Endothelial cell of umbilical vein (primary cell): ENCODE measurements at regions of chr1 and their contacts with region 1.

Region 1: GRCh38 chr1:226736908-226737818 is 1.9 kb downstream of the ITPKB start:
- DNase-seq: peak; percentile 50
- H3K4me3 ChIP-seq: peak overlapping the region; percentile 68 to 89 (median 70)
- H3K27ac ChIP-seq: peak overlapping the region; percentile 90
- H3K4me1 ChIP-seq: peaks cover 21% of the 10 kb centered on the region
- H3K27me3 ChIP-seq: no peaks in the 10 kb centered on the region
- CTCF ChIP-seq: peak in 1 of 2 donors; percentile 21
- POLR2A ChIP-seq: no peak

Region 2: GRCh38 chr1:226634166-226634588 is 103.0 kb before region 1 on chr1:
- CTCF ChIA-PET with region 1: interaction called, 4 read pairs
- POLR2A ChIA-PET with region 1: no interaction called
- dilution Hi-C with region 1: no loop called
- intact Hi-C with region 1: loop called (anchors 1 kb)
- DNase-seq: peak; percentile 60
- H3K4me3 ChIP-seq: no peak overlapping the region
- H3K27ac ChIP-seq: no peak overlapping the region
- H3K4me1 ChIP-seq: no peaks in the 10 kb centered on the region
- H3K27me3 ChIP-seq: no peaks in the 10 kb centered on the region
- CTCF ChIP-seq: peak; percentile 83 to 95
- POLR2A ChIP-seq: no peak

Region 3: GRCh38 chr1:226662642-226663326 is 74.4 kb before region 1 on chr1:
- CTCF ChIA-PET with region 1: no interaction called
- POLR2A ChIA-PET with region 1: no interaction called
- dilution Hi-C with region 1: no loop called
- intact Hi-C with region 1: loop called (anchors 5 kb)
- DNase-seq: peak; percentile 86
- H3K4me3 ChIP-seq: no peak overlapping the region
- H3K27ac ChIP-seq: peak overlapping the region; percentile 86
- H3K4me1 ChIP-seq: peaks cover 51% of the 10 kb centered on the region
- H3K27me3 ChIP-seq: no peaks in the 10 kb centered on the region
- CTCF ChIP-seq: no peak
- POLR2A ChIP-seq: no peak

Region 4: DNA sequence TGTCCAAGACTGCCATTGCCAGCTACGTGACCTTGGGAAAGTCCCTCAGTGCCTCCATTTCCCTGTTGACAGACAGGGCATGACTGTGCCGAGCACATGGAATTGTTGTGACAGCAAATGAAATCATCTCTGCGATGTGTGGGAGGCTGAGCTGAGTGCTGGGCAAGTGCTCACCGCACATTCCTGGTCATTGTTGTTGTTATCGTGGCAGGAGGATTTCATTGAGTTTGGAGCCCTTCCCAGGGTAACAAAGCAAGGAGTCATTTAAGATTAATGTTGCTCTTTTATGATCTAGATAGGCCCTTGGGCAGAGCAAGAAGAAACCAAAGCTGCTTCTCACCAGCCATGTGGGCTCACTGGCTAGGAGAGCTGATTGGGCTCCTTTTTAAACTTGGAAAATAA is 41.5 kb after region 1 on chr1:
- CTCF ChIA-PET with region 1: no interaction called
- POLR2A ChIA-PET with region 1: interaction called, 4 read pairs
- dilution Hi-C with region 1: no loop called
- intact Hi-C with region 1: loop called (anchors 2 kb)
- DNase-seq: peak; percentile 96
- H3K4me3 ChIP-seq: no peak overlapping the region
- H3K27ac ChIP-seq: peak overlapping the region; percentile 0
- H3K4me1 ChIP-seq: peaks cover 8% of the 10 kb centered on the region
- H3K27me3 ChIP-seq: no peaks in the 10 kb centered on the region
- CTCF ChIP-seq: no peak
- POLR2A ChIP-seq: no peak

Region 5: DNA sequence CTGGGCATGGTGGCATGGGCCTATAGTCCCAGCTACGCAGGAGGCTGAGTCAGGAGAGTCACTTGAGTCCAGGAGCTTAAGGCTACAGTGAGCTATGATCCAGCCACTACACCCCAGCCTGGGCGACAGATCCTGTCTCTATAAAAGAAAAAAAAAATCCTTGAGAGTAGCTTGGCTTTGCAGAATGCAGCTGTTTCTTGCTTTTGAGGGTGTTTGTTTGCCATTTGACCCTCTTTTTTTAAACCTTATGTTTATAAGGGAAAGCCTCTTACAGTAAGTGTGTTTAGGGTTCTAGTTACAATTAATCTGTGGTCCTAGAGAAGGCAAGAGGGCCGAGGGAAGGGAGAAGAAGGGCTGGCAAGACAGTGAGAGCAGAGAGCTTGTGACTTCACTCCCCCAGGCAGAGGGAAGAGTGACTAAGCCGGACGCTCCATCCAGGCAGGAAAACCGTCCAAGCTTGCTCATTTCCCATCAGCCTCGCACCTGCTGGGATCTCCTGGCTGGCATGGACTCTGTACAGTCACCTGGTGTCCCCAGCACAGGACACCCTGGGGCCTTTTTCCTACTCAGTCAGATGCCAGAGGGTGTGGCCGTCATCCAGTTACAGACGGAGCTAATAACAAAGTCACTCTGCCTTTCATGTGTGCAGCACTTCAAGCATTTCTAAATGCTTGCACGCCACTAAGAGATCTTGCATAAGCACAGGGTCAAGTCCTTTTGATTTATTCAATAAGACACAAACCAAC is 77.8 kb after region 1 on chr1:
- CTCF ChIA-PET with region 1: interaction called, 9 read pairs
- POLR2A ChIA-PET with region 1: interaction called, 10 read pairs
- dilution Hi-C with region 1: no loop called
- intact Hi-C with region 1: loop called (anchors 1 kb)
- DNase-seq: peak; percentile 96
- H3K4me3 ChIP-seq: no peak overlapping the region
- H3K27ac ChIP-seq: peak overlapping the region; percentile 95
- H3K4me1 ChIP-seq: peaks cover 46% of the 10 kb centered on the region
- H3K27me3 ChIP-seq: no peaks in the 10 kb centered on the region
- CTCF ChIP-seq: no peak
- POLR2A ChIP-seq: no peak

Region 6: DNA sequence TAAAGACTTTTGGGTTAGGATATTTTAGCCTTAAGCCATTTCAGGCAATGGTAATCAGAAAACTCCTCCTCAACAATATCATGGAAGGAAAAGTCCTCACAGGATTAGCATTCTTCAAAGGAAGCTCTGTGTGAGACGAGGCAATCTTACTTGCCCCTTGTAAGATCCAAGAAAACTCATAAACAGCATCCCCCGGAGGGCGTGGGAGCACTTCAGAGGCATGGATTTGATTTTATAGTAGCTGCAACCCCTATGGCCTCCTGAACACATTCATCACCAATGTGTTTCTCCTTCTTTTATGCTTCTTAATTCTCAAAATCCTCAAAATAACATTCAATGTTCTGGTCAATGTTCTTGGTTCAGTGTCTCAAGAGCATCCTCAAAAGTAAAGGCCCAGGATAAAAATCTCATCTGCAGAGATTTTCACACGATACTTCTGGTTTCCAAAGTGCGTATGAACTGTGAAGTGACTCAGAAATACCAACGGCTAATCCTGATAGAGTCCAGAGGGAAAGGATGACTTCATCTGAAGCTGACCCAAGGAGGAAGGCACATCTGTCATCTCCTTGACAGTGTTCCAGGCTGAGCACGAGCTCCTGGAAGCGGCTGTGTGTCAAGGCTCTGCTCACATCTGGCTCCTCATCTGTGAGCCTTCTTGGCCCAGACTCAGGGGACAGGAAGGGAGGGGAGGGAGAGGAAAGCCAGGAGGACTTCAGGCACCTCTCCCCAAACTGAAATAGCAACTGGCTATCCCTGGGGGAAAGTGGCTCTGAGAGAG is 84.0 kb after region 1 on chr1:
- CTCF ChIA-PET with region 1: interaction called, 7 read pairs
- POLR2A ChIA-PET with region 1: no interaction called
- dilution Hi-C with region 1: no loop called
- intact Hi-C with region 1: loop called (anchors 1 kb)
- DNase-seq: peak; percentile 96
- H3K4me3 ChIP-seq: no peak overlapping the region
- H3K27ac ChIP-seq: peak overlapping the region; percentile 83
- H3K4me1 ChIP-seq: peaks cover 46% of the 10 kb centered on the region
- H3K27me3 ChIP-seq: no peaks in the 10 kb centered on the region
- CTCF ChIP-seq: no peak
- POLR2A ChIP-seq: no peak

Region 7: GRCh38 chr1:226891846-226892523 is 154.8 kb after region 1 on chr1:
- CTCF ChIA-PET with region 1: no interaction called
- POLR2A ChIA-PET with region 1: no interaction called
- dilution Hi-C with region 1: no loop called
- intact Hi-C with region 1: no loop called
- DNase-seq: peak; percentile 65
- H3K4me3 ChIP-seq: no peak overlapping the region
- H3K27ac ChIP-seq: no peak overlapping the region
- H3K4me1 ChIP-seq: peaks cover 8% of the 10 kb centered on the region
- H3K27me3 ChIP-seq: no peaks in the 10 kb centered on the region
- CTCF ChIP-seq: no peak
- POLR2A ChIP-seq: no peak

Region 8: GRCh38 chr1:226940029-226940805 is 203.1 kb after region 1 on chr1 and contains the start of gene COQ8A:
- CTCF ChIA-PET with region 1: no interaction called
- POLR2A ChIA-PET with region 1: no interaction called
- dilution Hi-C with region 1: no loop called
- intact Hi-C with region 1: loop called (anchors 10 kb)
- DNase-seq: peak; percentile 99
- H3K4me3 ChIP-seq: peak within 1 kb of the TSS; percentile 40 to 63 (median 54)
- H3K27ac ChIP-seq: peak within 1 kb of the TSS; percentile 46
- H3K4me1 ChIP-seq: peaks cover 7% of the 10 kb centered on the region
- H3K27me3 ChIP-seq: no peaks in the 10 kb centered on the region
- CTCF ChIP-seq: no peak
- POLR2A ChIP-seq: no peak
- total RNA-seq, gene COQ8A: 7.3 and 9.4 TPM in 2 replicates